H1 (cell line): ENCODE measurements at regions of chr14 and their contacts with region 1.

Region 1: DNA sequence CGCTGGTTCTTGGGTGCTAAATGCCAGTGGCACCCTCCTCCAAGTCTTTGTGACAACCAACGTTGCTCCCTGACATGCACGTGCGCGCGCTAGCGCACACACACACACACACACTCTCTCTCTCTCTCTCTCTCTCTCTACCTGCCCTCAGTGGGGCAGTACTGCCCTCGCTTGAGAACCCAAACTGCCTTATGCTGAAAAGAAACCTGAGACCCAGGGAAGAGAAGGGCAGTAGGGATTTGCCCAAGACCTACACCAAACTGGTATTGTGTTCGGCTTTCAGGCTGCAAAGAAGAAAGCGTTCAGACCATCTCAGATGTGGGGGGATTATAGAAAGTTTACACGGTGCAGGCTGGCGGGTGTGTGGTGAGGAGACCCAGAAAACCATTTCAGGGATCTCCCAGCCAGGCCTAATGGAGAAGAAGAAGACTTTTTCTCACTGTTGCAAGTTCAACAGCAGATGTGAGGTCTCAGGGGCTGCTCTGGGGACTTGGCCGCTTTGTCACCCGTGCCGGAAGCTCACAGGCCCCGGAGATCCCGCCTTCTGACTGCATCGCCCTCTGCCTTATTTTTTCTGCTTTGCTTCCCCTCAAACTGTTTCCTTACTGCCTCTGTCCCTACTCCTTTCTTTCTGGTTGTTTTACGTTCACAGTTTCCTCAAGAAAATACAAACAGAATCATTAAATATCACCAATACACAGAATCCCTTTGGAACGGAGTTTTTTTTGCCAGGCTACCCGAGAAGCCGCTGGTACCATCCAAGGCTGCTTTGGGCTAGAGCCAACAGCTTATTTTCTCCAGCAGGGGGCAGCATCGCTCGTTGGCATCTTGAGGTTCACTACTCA is 82.4 kb downstream of the PPM1A start:
- DNase-seq: peak; percentile 68 to 92
- H3K4me3 ChIP-seq: peak overlapping the region; percentile 32 to 55 (median 44); a peak in 7 of 8 replicates
- H3K27ac ChIP-seq: no peak overlapping the region
- H3K4me1 ChIP-seq: peaks cover 2 to 12% (median 8%) of the 10 kb centered on the region in 4 experiments; a peak in 6 of 7 replicates
- H3K27me3 ChIP-seq: peaks cover 0 to 5% (median 1%) of the 10 kb centered on the region in 4 experiments; a peak in 3 of 7 replicates
- CTCF ChIP-seq: peak; percentile 82 to 87 (median 86)
- EP300 ChIP-seq: no peak
- POLR2A ChIP-seq: no peak
- RAD21 ChIP-seq: peak; percentile 82 to 88

Region 2: DNA sequence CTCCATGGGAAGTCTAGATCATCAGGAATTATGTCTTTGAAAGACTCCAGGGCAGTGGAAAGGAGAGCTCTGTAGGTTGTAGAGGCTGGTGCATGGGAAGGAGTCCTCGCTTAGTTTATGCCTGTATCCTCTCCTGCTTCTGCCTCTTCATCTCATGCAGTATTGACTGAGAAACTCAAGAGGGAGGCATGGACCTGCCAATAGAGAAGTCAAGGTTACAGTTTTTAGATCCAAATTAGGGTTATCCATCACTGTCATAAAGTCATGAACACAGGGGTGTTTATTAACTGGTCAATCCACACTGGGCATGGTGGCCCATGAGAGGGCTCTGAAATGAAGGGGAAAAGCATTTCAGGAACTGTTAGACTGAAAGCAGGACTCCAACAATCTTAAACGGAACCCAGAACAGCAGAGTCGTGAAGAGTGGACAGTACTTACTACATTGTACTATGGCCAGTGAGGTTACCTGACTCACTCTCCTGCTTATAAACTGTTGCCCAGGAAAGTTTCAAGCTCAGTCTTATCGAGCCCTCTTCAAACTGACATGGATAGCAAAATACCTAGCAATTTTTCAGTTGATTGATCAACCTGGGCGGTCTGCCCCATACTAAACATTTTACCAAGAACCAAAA is 136.1 kb before region 1 on chr14:
- CTCF ChIA-PET with region 1: interaction called, 16 read pairs
- POLR2A ChIA-PET with region 1: no interaction called
- DNase-seq: no peak
- H3K4me3 ChIP-seq: no peak overlapping the region
- H3K27ac ChIP-seq: no peak overlapping the region
- H3K4me1 ChIP-seq: peaks cover 0 to 3% (median 1%) of the 10 kb centered on the region in 4 experiments; a peak in 3 of 7 replicates
- H3K27me3 ChIP-seq: no peaks in the 10 kb centered on the region
- CTCF ChIP-seq: peak in 2 of 3 experiments; percentile 19 to 56; a peak in 2 of 4 replicates
- EP300 ChIP-seq: no peak
- POLR2A ChIP-seq: no peak
- RAD21 ChIP-seq: peak; percentile 76

Region 3: GRCh38 chr14:60257865-60258264 is 73.6 kb before region 1 on chr14:
- CTCF ChIA-PET with region 1: interaction called, 10 read pairs
- POLR2A ChIA-PET with region 1: no interaction called
- DNase-seq: no peak
- H3K4me3 ChIP-seq: no peak overlapping the region
- H3K27ac ChIP-seq: no peak overlapping the region
- H3K4me1 ChIP-seq: peaks cover 0 to 4% (median 0%) of the 10 kb centered on the region in 4 experiments; a peak in 1 of 7 replicates
- H3K27me3 ChIP-seq: no peaks in the 10 kb centered on the region
- CTCF ChIP-seq: no peak
- EP300 ChIP-seq: no peak
- POLR2A ChIP-seq: no peak
- RAD21 ChIP-seq: no peak

Region 4: DNA sequence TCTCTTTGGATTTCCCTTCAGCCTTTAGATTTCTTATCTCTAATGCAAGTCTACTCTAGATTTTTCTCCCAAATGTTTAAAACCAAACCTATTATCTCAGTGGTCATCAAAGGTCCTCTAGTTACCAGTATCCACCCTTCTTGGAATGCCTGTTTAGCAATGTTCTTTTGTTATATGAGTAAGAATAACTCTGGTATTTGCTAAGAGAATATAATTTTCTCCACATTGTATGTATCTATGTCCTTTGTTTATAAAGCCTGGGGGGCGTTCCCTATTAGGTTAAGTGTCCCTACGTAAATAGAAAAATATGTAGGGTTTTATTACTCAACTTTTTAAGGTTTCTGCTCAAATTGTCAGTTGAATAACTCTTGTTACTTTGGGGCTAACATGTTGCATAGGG is 55.1 kb before region 1 on chr14:
- CTCF ChIA-PET with region 1: interaction called, 29 read pairs
- POLR2A ChIA-PET with region 1: interaction called, 4 read pairs
- DNase-seq: no peak
- H3K4me3 ChIP-seq: no peak overlapping the region
- H3K27ac ChIP-seq: no peak overlapping the region
- H3K4me1 ChIP-seq: peaks cover 0 to 15% (median 12%) of the 10 kb centered on the region in 4 experiments; a peak in 5 of 7 replicates
- H3K27me3 ChIP-seq: no peaks in the 10 kb centered on the region
- CTCF ChIP-seq: no peak
- EP300 ChIP-seq: no peak
- POLR2A ChIP-seq: no peak
- RAD21 ChIP-seq: no peak

Region 5: DNA sequence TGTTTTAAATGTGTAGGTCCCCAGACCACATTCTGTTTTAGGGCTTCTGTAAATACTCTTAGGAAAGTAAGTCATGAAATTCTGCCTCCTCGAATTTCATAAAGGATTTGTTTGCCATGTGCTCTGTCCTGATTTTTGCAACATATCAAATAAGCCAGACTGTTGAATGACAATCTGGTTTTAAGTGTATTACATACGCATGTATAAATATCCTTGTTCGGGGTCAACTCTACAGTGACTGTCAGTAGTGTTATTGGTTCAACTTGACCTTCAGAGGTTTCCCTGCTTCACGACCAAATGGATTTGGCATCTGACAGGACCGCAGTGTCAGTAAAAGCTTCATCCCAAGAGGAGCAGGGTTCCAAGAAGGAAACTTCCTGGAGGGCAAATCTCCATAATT is 29.7 kb before region 1 on chr14:
- CTCF ChIA-PET with region 1: interaction called, 12 read pairs
- POLR2A ChIA-PET with region 1: no interaction called
- DNase-seq: no peak
- H3K4me3 ChIP-seq: no peak overlapping the region
- H3K27ac ChIP-seq: no peak overlapping the region
- H3K4me1 ChIP-seq: peaks cover 6 to 11% (median 10%) of the 10 kb centered on the region in 4 experiments
- H3K27me3 ChIP-seq: no peaks in the 10 kb centered on the region
- CTCF ChIP-seq: no peak
- EP300 ChIP-seq: no peak
- POLR2A ChIP-seq: no peak
- RAD21 ChIP-seq: no peak

Region 6: DNA sequence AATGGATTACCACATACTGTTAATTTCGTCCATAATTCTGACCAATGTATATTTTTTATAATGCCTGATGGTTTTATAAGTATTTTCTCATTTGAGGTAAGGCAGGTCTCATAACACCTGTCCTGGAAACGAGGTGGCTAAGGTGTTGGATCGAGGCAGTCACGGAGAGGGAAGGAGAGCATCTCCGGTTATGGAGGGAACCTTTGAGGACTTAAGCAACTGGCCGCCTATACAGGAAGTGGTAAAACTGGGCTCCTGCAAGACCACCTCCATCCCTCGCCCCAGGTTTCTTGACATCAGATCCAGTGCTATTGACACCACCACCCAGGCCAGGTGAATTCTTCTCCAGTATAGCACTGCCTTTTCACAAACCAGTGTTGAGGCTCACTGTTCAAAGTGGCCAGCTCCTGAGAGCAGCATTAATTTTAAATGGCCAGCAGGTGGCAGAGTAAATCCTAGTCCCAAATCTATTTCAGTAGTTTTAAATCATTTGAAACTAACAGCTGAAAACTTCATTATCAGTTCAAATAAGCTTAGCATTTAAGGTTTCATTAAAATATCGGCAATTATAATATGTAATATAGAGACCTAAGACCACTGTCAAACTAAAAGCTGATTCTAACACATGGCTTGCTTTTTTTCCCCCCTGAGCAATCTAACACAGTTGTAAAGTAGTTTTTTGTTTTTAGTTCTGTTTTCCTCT is 18.4 kb after region 1 on chr14:
- CTCF ChIA-PET with region 1: interaction called, 17 read pairs
- POLR2A ChIA-PET with region 1: no interaction called
- DNase-seq: peak in 1 of 2 experiments; percentile 57
- H3K4me3 ChIP-seq: peak overlapping the region in 1 of 4 experiments; percentile 7; a peak in 1 of 8 replicates
- H3K27ac ChIP-seq: no peak overlapping the region
- H3K4me1 ChIP-seq: peaks cover 0 to 4% (median 3%) of the 10 kb centered on the region in 4 experiments; a peak in 6 of 7 replicates
- H3K27me3 ChIP-seq: no peaks in the 10 kb centered on the region; a peak in 1 of 7 replicates
- CTCF ChIP-seq: peak in 2 of 3 experiments; percentile 60 to 66; a peak in 3 of 4 replicates
- EP300 ChIP-seq: no peak
- POLR2A ChIP-seq: no peak
- RAD21 ChIP-seq: peak; percentile 62 to 64

Region 7: GRCh38 chr14:60514741-60515491 is 183.5 kb after region 1 on chr14:
- CTCF ChIA-PET with region 1: interaction called, 14 read pairs
- POLR2A ChIA-PET with region 1: interaction called, 4 read pairs
- DNase-seq: peak in 1 of 2 experiments; percentile 83
- H3K4me3 ChIP-seq: peak overlapping the region; percentile 35 to 71 (median 45)
- H3K27ac ChIP-seq: no peak overlapping the region
- H3K4me1 ChIP-seq: peaks cover 8 to 23% (median 14%) of the 10 kb centered on the region in 4 experiments
- H3K27me3 ChIP-seq: peaks cover 45 to 76% (median 67%) of the 10 kb centered on the region in 4 experiments
- CTCF ChIP-seq: peak; percentile 32 to 58 (median 54)
- EP300 ChIP-seq: no peak
- POLR2A ChIP-seq: no peak; a peak in 1 of 3 replicates
- RAD21 ChIP-seq: no peak; a peak in 1 of 4 replicates